Right ventricle myocardium inferior (tissue), 1 donor: ENCODE measurements at regions of chr1 and their contacts with region 1.

Region 1: DNA sequence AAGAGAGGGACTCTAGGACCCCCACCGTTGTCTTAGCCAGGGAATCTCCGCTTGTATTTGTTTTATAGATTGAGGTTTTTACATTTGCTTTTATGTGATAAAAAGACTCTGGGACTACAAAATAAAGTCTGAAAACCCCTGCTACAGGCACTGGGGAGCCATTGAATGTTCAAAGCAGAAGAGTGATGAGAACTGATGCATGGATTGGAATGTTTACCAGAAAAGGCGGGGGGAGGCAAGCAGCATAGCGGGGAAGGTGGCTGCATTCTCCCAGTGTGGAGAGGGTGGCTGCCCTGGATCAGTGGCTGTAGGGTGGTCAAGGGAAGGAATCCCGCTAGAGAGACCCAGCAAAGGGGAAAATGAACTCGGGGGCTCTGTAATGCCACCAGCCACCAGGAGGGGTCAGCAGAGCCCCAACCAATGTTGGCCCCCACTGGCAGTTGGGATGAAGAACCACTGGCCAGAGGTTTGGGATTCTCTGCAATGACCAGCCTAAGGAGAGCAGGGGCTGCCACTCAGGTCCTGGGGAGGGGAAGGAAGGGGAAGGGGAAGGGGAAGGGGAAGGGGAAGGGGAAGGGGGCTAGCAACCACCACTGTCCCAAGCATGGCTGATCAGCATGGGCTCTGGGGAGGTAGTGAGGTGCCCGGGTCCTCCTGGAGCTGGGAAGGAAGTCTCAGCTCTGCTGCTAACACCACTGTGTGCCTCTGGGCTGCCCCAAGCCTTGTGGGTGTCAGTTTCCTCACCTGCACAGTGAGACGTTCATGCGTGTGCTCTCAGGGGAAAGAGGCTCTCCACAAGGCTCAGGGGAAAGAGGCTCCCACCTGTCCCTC is 19.2 kb upstream of the PEF1 start:
- DNase-seq: no peak
- ATAC-seq: peak; percentile 48

Region 2: DNA sequence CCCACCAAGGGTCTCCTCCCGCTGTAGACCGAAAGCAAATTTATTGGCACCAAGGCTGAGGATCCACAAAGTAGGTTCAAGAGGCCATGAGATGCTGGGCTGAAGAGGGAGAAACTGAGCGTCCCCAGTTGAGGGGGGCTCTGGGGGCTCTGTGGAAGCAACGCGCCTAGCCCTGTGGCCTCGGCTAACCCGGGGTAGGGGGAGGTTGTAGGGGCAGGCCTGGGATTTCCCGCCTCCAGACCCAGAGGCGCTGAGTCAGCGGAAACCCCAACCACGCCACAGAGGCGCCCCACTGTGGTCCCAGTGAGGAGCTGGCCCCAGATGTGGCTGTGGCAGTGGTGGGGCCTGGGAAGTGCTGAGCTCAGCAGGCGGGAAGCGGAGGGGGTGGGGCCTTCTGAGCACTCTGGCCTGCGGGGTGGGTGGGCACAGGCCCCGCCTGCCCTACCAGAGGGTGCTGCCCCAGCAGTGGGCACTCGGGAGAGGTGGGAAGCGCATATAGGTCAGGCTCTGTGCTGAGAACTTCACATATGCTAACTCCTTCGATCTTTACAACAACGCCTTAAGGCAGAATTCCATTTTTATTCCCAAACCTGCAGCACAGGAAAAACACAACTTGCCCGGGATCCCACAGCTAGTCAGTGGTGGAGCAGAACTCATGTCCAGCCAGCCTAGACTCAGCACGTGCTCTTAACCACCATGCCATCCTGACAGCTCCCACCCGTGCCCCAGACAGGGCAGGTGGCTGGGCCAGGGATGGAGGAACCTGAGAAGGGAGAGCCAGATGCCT is 41.4 kb after region 1 on chr1:
- intact Hi-C with region 1: loop called (anchors 2 kb)
- DNase-seq: peak; percentile 77
- ATAC-seq: peak; percentile 37

Region 3: GRCh38 chr1:31745096-31745945 is 81.5 kb after region 1 on chr1:
- intact Hi-C with region 1: loop called (anchors 2 kb)
- DNase-seq: no peak
- ATAC-seq: peak; percentile 54